Heart right ventricle (tissue), 16 donors: ENCODE measurements at regions of chr12 and their contacts with region 1.

Region 1: DNA sequence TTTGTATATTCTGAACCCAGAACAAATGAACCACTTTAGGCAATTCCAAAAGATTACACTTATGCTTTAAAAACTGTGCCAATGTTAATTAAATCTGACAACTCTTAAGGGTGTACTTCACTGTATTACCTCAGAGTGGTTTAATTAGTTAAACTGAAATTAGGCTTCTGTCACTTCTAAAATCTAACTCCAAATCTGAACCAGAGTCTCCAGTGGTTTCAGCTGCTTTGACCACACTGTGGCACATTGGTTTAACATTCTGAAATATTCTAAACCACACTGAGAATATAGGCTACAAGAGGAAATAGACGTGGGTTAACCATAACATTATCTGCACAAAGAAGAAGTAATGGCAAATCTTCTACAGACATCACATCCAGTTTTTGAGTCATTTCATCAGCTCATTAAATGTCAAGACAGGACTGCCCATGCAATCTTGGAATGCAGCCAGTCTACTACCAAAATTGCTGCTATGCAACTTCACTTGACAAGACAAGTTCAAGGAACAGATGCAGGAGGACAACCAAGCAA is 94.8 kb downstream of the LRP6 start:
- DNase-seq: no peak
- ATAC-seq: no peak
- H3K4me3 ChIP-seq: no peak overlapping the region
- H3K27ac ChIP-seq: no peak overlapping the region
- H3K4me1 ChIP-seq: peaks cover 0 to 11% (median 0%) of the 10 kb centered on the region in 9 donors
- H3K27me3 ChIP-seq: no peaks in the 10 kb centered on the region
- CTCF ChIP-seq: no peak

Region 2: DNA sequence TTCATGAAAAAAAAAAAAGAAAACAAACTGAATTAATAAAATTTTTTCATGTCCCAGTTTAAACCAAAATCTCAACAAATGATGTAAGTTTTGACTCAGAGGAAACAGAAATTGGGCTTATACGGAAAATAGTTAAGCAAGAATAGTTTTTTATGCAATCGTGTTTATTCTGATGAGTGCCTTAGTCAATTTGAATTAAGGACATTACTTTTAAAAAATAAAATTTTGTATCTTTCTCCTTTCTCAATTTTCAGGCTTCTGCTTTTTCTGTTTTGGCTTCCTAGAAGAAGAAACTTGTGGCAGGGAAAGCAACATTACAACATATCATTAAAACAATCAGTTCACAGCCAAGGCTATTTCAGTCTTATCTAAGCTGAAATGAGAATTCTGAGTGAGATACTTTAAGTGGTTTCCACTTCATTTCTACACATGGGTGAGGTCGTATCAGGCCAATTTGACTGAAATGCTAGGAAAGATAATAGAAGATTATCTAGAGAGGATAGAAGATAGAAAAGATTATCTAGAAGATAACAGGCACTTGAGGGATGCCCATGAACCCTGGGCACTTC is 48.9 kb before region 1 on chr12:
- intact Hi-C with region 1: no loop called
- DNase-seq: no peak
- ATAC-seq: no peak
- H3K4me3 ChIP-seq: no peak overlapping the region
- H3K27ac ChIP-seq: no peak overlapping the region
- H3K4me1 ChIP-seq: peaks cover 0 to 6% (median 0%) of the 10 kb centered on the region in 9 donors
- H3K27me3 ChIP-seq: no peaks in the 10 kb centered on the region
- CTCF ChIP-seq: no peak

Region 3: GRCh38 chr12:12334367-12335040 is 162.4 kb after region 1 on chr12:
- intact Hi-C with region 1: loop called in 1 of 10 experiments (anchors 10 kb)
- DNase-seq: peak; percentile 32 to 51
- ATAC-seq: peak; percentile 21 to 65 (median 54)
- H3K4me3 ChIP-seq: no peak overlapping the region
- H3K27ac ChIP-seq: no peak overlapping the region
- H3K4me1 ChIP-seq: peaks cover 0 to 33% (median 19%) of the 10 kb centered on the region in 9 donors
- H3K27me3 ChIP-seq: no peaks in the 10 kb centered on the region
- CTCF ChIP-seq: peak; percentile 80 to 90 (median 86)